ENCODE measurements at regions of chr5 and their contacts with region 1.

Region 1: DNA sequence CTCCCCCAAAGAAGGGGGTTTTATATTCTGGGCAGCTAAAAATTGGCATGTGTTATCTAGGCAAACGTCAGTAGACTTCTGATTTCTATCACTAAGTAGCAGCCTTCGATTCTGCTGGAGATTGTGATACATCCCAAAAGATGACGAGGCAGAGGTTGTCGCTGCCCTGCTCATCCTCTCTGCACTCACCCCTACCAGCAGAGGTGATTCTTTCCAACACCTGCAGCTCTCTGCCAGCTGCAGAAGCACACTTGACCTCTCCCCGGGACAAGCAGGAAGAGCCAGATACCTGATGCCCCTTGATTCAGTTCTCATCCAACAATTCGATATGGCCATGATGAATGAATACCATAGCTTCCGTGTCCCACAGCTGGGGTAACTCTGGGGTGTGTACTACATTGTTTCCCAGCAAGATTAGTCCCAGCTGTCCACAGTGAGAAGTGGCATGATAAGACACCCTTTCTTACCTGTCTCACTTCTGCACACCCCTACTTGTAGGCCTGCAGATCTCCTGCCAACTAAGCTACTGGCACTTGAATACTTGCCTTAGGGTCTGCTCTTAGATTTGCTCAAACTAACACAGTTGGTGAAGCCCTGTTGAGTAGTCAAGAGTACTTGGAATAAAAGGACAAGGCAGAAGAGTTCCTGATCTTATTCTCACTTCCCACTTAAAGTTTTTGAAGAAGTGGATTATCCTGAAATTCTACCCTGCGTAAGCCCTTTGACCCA is 37.6 kb upstream of the SMAD5 start:
- DNase-seq: no peak
- H3K4me3 ChIP-seq: no peak overlapping the region
- H3K27ac ChIP-seq: no peak overlapping the region
- H3K4me1 ChIP-seq: peaks cover 14% of the 10 kb centered on the region; the same call in 1 of the 2 replicates
- H3K27me3 ChIP-seq: no peaks in the 10 kb centered on the region
- CTCF ChIP-seq: no peak

Region 2: GRCh38 chr5:136132557-136133221 is 37.6 kb after region 1 on chr5 and contains the start of gene SMAD5:
- CTCF ChIA-PET with region 1: no interaction called
- POLR2A ChIA-PET with region 1: no interaction called
- intact Hi-C with region 1: loop called (anchors 5 kb)
- DNase-seq: peak; percentile 77 to 94
- H3K4me3 ChIP-seq: peak within 1 kb of the TSS; percentile 78
- H3K27ac ChIP-seq: peak within 1 kb of the TSS; percentile 60
- H3K4me1 ChIP-seq: peaks cover 19% of the 10 kb centered on the region
- H3K27me3 ChIP-seq: no peaks in the 10 kb centered on the region
- CTCF ChIP-seq: no peak
- total RNA-seq, gene SMAD5: 50.6 and 58.2 TPM in 2 replicates

Region 3: DNA sequence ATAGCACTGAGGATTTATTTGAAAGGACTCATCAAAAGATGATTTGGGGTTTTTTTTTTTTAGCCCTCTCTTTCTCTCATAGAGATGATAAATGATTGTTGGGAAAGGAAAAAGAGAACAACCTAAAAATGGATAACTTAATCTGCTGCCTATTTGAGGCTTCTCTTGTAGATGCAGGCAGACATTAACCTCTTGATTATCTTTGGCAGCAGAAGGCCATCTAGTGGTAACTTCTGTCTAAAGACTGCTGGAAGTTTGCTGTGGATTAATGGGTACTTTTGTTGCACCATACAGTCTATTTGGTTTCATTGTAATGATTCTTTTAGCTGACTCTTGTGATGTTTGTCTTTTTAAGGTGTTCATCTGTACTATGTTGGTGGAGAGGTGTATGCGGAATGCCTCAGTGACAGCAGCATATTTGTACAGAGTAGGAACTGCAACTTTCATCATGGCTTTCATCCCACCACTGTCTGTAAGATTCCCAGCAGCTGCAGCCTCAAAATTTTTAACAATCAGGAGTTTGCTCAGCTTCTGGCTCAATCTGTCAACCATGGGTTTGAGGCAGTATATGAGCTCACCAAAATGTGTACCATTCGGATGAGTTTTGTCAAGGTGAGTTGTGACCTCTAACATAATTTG is 79.1 kb after region 1 on chr5:
- CTCF ChIA-PET with region 1: no interaction called
- POLR2A ChIA-PET with region 1: no interaction called
- intact Hi-C with region 1: loop called (anchors 2 kb)
- DNase-seq: no peak
- H3K4me3 ChIP-seq: no peak overlapping the region
- H3K27ac ChIP-seq: no peak overlapping the region
- H3K4me1 ChIP-seq: no peaks in the 10 kb centered on the region
- H3K27me3 ChIP-seq: no peaks in the 10 kb centered on the region
- CTCF ChIP-seq: peak; percentile 77

Measured in PC-9 (cell line).